Activated CD8-positive, alpha-beta T cell treated with anti-CD3 and anti-CD28 coated beads, Interleukin-2, amount 10 ng/mL, durations not matched to agents 7 days and 5 days (primary cell): ENCODE measurements at regions of chr10 and their contacts with region 1.

Region 1: DNA sequence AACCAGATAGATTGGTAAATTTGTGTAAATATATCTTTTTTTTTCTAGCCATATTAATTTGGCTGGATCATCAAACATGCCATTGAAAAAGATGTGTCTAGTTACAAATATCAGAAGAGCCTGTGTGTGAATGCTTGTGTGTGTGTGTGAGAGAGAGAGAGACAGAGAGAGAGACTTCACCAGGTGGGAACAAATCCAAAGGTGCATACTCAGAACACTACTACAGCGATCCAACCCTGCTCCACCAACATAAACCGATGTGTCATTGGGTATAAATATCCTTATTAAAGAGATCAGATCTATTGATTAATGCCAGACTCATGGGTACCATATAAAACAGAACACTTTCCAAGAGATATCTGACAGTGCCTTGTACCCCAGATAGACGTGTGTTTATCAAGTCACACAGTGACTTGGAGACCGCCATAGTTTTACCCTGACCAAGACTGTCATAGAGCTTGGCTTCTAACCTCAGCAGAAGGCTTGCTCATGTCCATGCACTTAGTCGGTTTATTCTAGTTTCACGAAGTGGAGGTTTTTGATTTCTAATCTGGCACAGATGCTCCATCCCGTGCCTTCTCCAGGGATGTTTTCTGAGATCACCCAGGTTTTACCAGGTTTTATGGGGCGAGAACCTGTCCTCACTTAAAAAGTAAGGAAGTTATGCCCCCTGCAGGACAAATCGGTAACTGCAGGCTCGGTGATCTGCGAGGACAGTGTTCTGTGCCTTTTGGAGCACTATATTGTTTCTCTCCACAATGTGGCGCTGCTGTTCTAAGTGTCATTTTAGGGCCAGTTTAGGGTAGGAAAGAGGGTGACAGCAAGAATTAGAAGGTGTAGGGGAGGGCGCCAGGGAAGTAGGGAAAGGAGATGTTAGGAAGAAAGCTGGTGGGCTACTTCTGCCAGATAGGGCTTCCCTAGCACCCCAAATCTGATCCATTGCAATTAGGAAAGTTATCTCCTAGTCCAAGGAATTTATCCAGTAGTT is 29.3 kb upstream of the WNT8B start:
- DNase-seq: peak; percentile 99
- ATAC-seq: peak; percentile 96
- H3K4me3 Mint-ChIP-seq: no peak overlapping the region
- H3K27ac Mint-ChIP-seq: no peak overlapping the region
- H3K4me1 Mint-ChIP-seq: peaks cover 15% of the 10 kb centered on the region
- H3K27me3 Mint-ChIP-seq: no peaks in the 10 kb centered on the region

Region 2: GRCh38 chr10:100346765-100347567 is 86.6 kb before region 1 on chr10 and contains the start of gene SCD:
- CTCF ChIA-PET with region 1: interaction called, 311 read pairs
- POLR2A ChIA-PET with region 1: interaction called, 5 read pairs
- DNase-seq: peak; percentile 95
- ATAC-seq: peak; percentile 94
- H3K4me3 Mint-ChIP-seq: peak within 1 kb of the TSS; percentile 96
- H3K27ac Mint-ChIP-seq: peak within 1 kb of the TSS; percentile 90
- H3K4me1 Mint-ChIP-seq: peaks cover 67% of the 10 kb centered on the region
- H3K27me3 Mint-ChIP-seq: no peaks in the 10 kb centered on the region
- total RNA-seq, gene SCD: 239 to 240 TPM

Region 3: DNA sequence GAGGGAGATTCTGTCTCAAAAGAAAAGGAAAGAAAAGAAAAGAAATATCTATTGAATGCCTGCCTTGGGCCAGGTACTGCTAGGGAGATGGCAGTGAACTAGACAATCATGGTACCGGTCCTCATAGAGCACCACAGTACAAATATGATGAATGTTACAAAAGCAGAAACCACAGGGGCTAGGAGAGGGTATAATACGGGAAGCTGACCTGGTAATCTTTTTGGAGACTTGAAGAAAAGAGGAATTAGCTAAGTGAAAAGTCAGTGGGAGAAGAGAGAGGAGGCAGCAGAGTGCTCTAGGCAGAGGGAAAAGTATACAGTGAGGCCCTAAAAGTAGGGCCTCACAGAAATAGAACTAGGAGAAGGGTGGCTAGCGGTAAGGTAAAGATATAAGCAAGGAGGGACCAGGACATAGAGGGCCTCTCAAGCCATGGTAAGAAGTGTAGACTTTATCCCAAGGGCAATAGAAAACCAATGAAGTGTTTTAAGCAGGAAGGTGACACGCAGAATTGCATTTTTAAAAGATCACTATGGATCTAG is 13.6 kb before region 1 on chr10:
- CTCF ChIA-PET with region 1: interaction called, 10 read pairs
- POLR2A ChIA-PET with region 1: no interaction called
- DNase-seq: no peak
- ATAC-seq: no peak
- H3K4me3 Mint-ChIP-seq: no peak overlapping the region
- H3K27ac Mint-ChIP-seq: no peak overlapping the region
- H3K4me1 Mint-ChIP-seq: no peaks in the 10 kb centered on the region
- H3K27me3 Mint-ChIP-seq: peaks cover 6% of the 10 kb centered on the region

Region 4: GRCh38 chr10:100524638-100525037 is 91.1 kb after region 1 on chr10:
- CTCF ChIA-PET with region 1: interaction called, 146 read pairs
- POLR2A ChIA-PET with region 1: interaction called, 3 read pairs
- DNase-seq: no peak
- ATAC-seq: no peak
- H3K4me3 Mint-ChIP-seq: no peak overlapping the region
- H3K27ac Mint-ChIP-seq: no peak overlapping the region
- H3K4me1 Mint-ChIP-seq: peaks cover 31% of the 10 kb centered on the region
- H3K27me3 Mint-ChIP-seq: no peaks in the 10 kb centered on the region